ENCODE measurements at regions of chr10 and their contacts with region 1.

Region 1: GRCh38 chr10:2914741-2915140 is 152.6 kb upstream of the PFKP start:
- DNase-seq: no peak
- ATAC-seq: no peak
- H3K4me3 Mint-ChIP-seq: no peak overlapping the region
- H3K27ac Mint-ChIP-seq: no peak overlapping the region
- H3K4me1 Mint-ChIP-seq: peaks cover 4% of the 10 kb centered on the region
- H3K27me3 Mint-ChIP-seq: peaks cover 11% of the 10 kb centered on the region

Region 2: GRCh38 chr10:2938869-2939268 is 24.1 kb after region 1 on chr10:
- CTCF ChIA-PET with region 1: no interaction called
- POLR2A ChIA-PET with region 1: no interaction called
- intact Hi-C with region 1: loop called in 1 of 2 experiments (anchors 2 kb)
- DNase-seq: no peak
- ATAC-seq: no peak
- H3K4me3 Mint-ChIP-seq: no peak overlapping the region
- H3K27ac Mint-ChIP-seq: no peak overlapping the region
- H3K4me1 Mint-ChIP-seq: no peaks in the 10 kb centered on the region
- H3K27me3 Mint-ChIP-seq: peaks cover 37% of the 10 kb centered on the region

Measured in activated CD4-positive, alpha-beta T cell treated with anti-CD3 and anti-CD28 coated beads for 36 hours (primary cell).